K562 (cell line): ENCODE measurements at regions of chr6 and their contacts with region 1.

Region 1: DNA sequence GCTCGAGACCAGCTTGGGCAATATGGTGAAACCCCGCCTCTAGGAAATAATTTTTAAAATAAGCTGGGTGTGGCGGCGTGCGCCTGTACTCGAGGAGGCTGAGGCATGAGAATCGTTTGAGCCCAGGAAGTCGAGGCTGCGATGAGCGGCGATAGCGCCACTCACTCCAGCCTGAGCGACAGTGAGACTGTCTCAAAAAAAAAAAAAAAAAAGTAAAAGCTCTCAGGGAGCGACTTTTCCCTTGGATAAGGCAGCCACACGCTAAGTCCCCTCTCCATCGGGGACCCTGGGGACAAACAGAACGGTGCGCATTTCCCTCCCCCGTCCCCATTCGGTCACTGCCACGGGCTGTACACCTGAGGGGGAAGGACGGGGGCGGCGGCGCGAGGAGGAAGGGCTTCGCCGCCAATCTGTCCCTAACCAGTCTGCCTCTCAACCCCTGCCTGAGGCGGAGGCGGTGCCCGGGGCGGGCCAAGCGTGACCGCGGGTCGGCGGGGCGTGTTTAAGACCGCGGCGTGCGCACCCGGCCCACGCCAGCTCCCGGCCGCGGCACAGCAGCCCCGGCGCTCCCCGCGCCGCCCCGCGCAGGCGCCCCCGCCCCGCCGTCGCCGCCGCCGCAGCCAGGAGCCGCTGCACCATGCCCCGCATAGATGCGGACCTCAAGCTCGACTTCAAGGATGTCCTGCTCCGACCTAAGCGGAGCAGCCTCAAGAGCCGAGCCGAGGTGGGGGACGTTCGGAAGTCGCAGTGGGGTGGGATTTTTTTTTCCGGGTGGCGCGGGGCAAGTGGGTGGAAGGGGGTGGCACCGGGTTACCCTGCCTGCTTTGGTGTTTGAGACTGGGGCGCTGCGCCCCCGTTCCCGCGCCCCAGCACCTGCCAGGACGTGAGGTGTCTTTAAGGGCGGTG is at the start of gene GMPR:
- DNase-seq: peak; percentile 91 to 96 (median 94)
- ATAC-seq: peak; percentile 85
- H3K4me3 ChIP-seq: peak within 1 kb of the TSS; percentile 58
- H3K27ac ChIP-seq: peak within 1 kb of the TSS; percentile 72
- H3K4me1 ChIP-seq: peaks cover 45 to 58% of the 10 kb centered on the region in 2 experiments
- H3K27me3 ChIP-seq: no peaks in the 10 kb centered on the region
- CTCF ChIP-seq: peak in 2 of 3 experiments; percentile 1 to 28; a peak in 1 of 6 replicates
- EP300 ChIP-seq: no peak
- POLR2A ChIP-seq: peak; percentile 72
- RAD21 ChIP-seq: no peak
- polyA plus RNA-seq, gene GMPR: 42.0 to 47.8 TPM

Region 2: DNA sequence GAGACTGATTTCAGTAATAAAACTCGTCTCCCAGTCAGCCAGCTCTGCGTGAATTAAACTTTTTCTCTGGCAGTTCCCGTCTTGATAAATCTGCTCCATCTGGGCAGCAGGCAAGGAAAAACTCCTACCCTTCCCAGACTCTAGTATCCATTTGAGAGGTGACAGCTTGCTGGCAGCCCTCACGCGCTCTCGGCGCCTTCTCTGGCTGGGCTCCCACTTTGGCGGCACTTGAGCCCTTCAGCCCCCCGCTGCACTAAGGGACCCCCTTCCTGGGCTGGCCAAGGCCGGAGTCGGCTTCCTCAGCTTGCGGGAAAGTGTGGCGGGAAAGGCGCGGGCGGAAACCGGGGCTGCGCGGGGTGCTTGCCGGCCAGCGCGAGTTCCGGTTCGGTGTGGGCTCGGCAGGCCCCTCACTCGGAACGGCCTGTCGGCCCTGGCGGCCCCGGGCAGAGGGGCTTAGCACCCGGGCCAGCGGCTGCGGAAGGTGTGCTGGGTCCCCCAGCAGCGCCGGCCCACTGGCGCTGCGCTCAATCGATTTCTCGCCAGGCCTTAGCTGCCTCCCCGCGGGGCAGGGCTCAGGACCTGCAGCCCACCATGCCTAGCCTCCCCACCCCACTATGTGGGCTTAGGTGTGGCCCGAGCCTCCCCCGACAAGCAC is 21.7 kb before region 1 on chr6:
- CTCF ChIA-PET with region 1: no interaction called
- POLR2A ChIA-PET with region 1: interaction called, 12 read pairs
- in situ Hi-C with region 1: no loop called
- intact Hi-C with region 1: loop called (anchors 2 kb)
- DNase-seq: no peak
- ATAC-seq: no peak
- H3K4me3 ChIP-seq: no peak overlapping the region
- H3K27ac ChIP-seq: peak overlapping the region; percentile 93
- H3K4me1 ChIP-seq: peaks cover 26 to 38% of the 10 kb centered on the region in 2 experiments
- H3K27me3 ChIP-seq: no peaks in the 10 kb centered on the region
- CTCF ChIP-seq: no peak
- EP300 ChIP-seq: no peak
- POLR2A ChIP-seq: no peak
- RAD21 ChIP-seq: no peak

Region 3: DNA sequence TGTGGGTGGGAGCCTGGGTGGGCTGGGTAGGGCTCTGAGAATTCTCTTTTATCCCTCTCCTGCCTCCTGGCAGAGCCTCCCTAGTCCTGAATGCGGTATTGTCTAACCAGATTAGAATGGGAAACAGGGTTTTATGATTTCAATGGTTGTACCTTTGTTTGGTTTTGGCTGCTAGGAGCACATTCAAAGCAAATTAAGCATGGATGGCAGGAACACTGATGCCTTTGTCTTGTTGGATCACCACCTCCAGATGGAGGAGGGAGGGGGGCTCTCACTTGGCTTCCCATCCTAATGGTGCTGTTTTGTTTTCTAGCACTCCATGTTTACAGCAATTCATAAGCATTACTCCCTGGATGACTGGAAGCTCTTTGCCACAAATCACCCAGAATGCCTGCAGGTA is 11.7 kb after region 1 on chr6:
- CTCF ChIA-PET with region 1: no interaction called
- POLR2A ChIA-PET with region 1: interaction called, 18 read pairs
- in situ Hi-C with region 1: no loop called
- intact Hi-C with region 1: no loop called
- DNase-seq: no peak
- ATAC-seq: no peak
- H3K4me3 ChIP-seq: no peak overlapping the region
- H3K27ac ChIP-seq: no peak overlapping the region
- H3K4me1 ChIP-seq: peaks cover 0 to 8% of the 10 kb centered on the region in 2 experiments; a peak in 3 of 5 replicates
- H3K27me3 ChIP-seq: no peaks in the 10 kb centered on the region
- CTCF ChIP-seq: no peak
- EP300 ChIP-seq: no peak
- POLR2A ChIP-seq: no peak
- RAD21 ChIP-seq: no peak

Region 4: GRCh38 chr6:16257999-16258708 is 19.8 kb after region 1 on chr6:
- CTCF ChIA-PET with region 1: no interaction called
- POLR2A ChIA-PET with region 1: interaction called, 32 read pairs
- in situ Hi-C with region 1: no loop called
- intact Hi-C with region 1: no loop called
- DNase-seq: peak in 3 of 4 experiments; percentile 27 to 47 (median 38)
- ATAC-seq: peak; percentile 87
- H3K4me3 ChIP-seq: no peak overlapping the region
- H3K27ac ChIP-seq: peak overlapping the region; percentile 51
- H3K4me1 ChIP-seq: peaks cover 9 to 18% of the 10 kb centered on the region in 2 experiments; a peak in 4 of 5 replicates
- H3K27me3 ChIP-seq: no peaks in the 10 kb centered on the region
- CTCF ChIP-seq: no peak
- EP300 ChIP-seq: no peak
- POLR2A ChIP-seq: peak; percentile 52; the same call in 1 of the 2 replicates
- RAD21 ChIP-seq: no peak

Region 5: GRCh38 chr6:16651871-16652270 is 413.6 kb after region 1 on chr6:
- CTCF ChIA-PET with region 1: no interaction called
- POLR2A ChIA-PET with region 1: no interaction called
- in situ Hi-C with region 1: no loop called
- intact Hi-C with region 1: no loop called
- DNase-seq: no peak
- ATAC-seq: no peak
- H3K4me3 ChIP-seq: no peak overlapping the region
- H3K27ac ChIP-seq: no peak overlapping the region
- H3K4me1 ChIP-seq: no peaks in the 10 kb centered on the region
- H3K27me3 ChIP-seq: peaks cover 7 to 8% of the 10 kb centered on the region in 2 experiments; a peak in 3 of 5 replicates
- CTCF ChIP-seq: no peak
- EP300 ChIP-seq: no peak
- POLR2A ChIP-seq: no peak
- RAD21 ChIP-seq: no peak